Breast epithelium (tissue), 4 donors: ENCODE measurements at regions of chr20 and their contacts with region 1.

Region 1: GRCh38 chr20:20360464-20360863 is 7.4 kb upstream of the INSM1 start:
- DNase-seq: no peak
- H3K4me3 ChIP-seq: no peak overlapping the region
- H3K27ac ChIP-seq: no peak overlapping the region
- H3K4me1 ChIP-seq: no peaks in the 10 kb centered on the region
- H3K27me3 ChIP-seq: peaks cover 0 to 52% of the 10 kb centered on the region in 2 donors
- CTCF ChIP-seq: peak; percentile 16 to 65 (median 64)
- POLR2A ChIP-seq: no peak

Region 2: GRCh38 chr20:20286061-20286460 is 74.4 kb before region 1 on chr20:
- intact Hi-C with region 1: no loop called
- DNase-seq: no peak
- H3K4me3 ChIP-seq: no peak overlapping the region
- H3K27ac ChIP-seq: no peak overlapping the region
- H3K4me1 ChIP-seq: no peaks in the 10 kb centered on the region
- H3K27me3 ChIP-seq: peaks cover 0 to 8% of the 10 kb centered on the region in 2 donors
- CTCF ChIP-seq: no peak
- POLR2A ChIP-seq: no peak

Region 3: GRCh38 chr20:21529863-21530262 is 1169.4 kb after region 1 on chr20:
- intact Hi-C with region 1: loop called (anchors 5 kb)
- DNase-seq: no peak
- H3K4me3 ChIP-seq: no peak overlapping the region
- H3K27ac ChIP-seq: no peak overlapping the region
- H3K4me1 ChIP-seq: no peaks in the 10 kb centered on the region
- H3K27me3 ChIP-seq: peaks cover 0 to 15% of the 10 kb centered on the region in 2 donors
- CTCF ChIP-seq: no peak
- POLR2A ChIP-seq: no peak